ENCODE measurements at regions of chr5 and their contacts with region 1.

Region 1: DNA sequence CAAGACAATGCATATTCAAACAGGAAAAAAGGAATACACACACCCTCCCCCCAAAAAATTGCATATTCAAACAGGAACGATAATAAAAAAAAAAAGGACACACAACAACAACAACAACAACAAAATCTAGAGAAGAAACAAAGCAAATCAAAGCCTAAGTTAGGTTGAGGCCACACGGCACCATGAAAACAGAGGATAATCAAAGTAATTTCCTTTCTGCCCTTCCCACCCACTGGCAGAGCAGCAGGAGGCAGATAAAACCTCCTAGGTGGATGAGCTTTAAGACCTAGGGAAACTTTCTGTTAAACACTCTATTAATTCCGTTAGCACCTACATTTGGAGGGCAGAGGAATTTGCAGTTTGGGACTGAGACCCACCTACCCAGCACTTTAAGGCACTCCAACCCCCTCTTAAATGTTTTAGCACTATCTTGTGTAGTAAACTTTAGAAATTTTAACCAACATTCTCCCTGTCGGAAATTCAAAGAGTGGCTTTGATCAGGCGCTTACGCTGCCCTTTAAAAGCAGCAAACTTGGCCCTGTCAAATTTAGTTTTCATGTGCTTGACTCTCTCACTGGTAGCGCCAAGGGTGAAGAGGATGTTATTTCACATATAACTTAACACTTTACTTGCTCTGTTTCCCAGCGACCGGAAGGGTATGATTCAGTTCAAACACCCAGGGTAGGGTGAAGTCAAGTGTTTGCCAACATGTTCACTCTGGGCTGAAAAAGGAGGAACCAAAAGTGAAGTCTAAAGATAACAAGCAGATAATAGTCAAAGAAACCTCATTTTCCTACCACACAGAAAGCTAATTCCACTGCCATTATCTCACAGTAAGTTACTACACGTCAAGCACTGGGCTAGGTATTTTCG is 9.2 kb downstream of the ENC1 start:
- DNase-seq: no peak
- ATAC-seq: peak; percentile 10
- H3K4me3 ChIP-seq: 0 out of 4 replicates have a peak overlapping the region, but pooled peaks of 1 of the 2 experiments have one; percentile 2
- H3K27ac ChIP-seq: peak overlapping the region; percentile 86
- H3K4me1 ChIP-seq: peaks cover 60 to 71% of the 10 kb centered on the region in 2 experiments
- H3K27me3 ChIP-seq: no peaks in the 10 kb centered on the region
- CTCF ChIP-seq: no peak
- POLR2A ChIP-seq: no peak
- RAD21 ChIP-seq: no peak

Region 2: DNA sequence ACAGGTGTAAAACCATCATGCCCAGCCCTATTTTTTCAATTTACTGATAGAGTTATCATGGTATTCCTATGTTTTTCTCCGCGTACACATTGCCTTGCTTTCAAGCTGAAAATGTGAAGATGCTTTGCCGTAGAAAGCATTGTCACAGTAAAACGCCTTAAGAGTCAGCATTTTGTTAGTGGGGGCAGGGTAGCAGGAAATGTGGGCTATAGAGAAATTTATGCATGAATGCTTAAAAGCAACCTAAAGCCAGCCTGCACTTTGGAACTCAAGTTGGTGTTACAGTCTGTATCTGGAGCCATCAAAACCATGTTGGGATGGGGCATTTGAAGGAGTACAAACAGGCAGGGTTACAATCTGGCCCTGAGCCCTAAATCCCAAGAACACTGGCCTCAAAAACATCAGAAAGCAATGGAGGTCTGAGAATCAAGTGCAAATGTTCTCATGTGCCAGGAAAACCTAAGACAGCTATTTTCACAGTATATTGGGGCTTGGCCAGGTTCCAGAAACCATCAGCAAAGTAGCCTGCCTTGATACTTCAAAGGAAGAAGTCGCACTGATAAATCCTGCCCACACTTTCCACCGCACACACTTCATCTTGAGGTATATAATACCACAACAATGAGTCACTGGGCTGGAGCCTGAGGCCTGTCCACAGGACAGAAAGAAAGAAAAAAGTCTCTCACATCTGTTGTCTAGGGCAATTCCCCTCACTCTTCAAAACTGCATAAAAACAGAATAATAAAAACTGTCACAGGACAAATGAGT is 304.6 kb before region 1 on chr5:
- CTCF ChIA-PET with region 1: no interaction called
- POLR2A ChIA-PET with region 1: no interaction called
- RAD21 ChIA-PET with region 1: no interaction called
- intact Hi-C with region 1: loop called (anchors 5 kb)
- DNase-seq: peak; percentile 87
- ATAC-seq: peak; percentile 95
- H3K4me3 ChIP-seq: 0 out of 4 replicates have a peak overlapping the region, but pooled peaks of 1 of the 2 experiments have one; percentile 8
- H3K27ac ChIP-seq: no peak overlapping the region; the same call in 1 of the 2 replicates
- H3K4me1 ChIP-seq: peaks cover 27 to 31% of the 10 kb centered on the region in 2 experiments
- H3K27me3 ChIP-seq: peaks cover 48% of the 10 kb centered on the region
- CTCF ChIP-seq: no peak
- POLR2A ChIP-seq: no peak
- RAD21 ChIP-seq: peak; percentile 14; the same call in 1 of the 2 replicates

Region 3: GRCh38 chr5:74543156-74543995 is 87.9 kb before region 1 on chr5:
- CTCF ChIA-PET with region 1: no interaction called
- POLR2A ChIA-PET with region 1: no interaction called
- RAD21 ChIA-PET with region 1: no interaction called
- intact Hi-C with region 1: loop called (anchors 2 kb)
- DNase-seq: peak; percentile 82
- ATAC-seq: peak; percentile 90
- H3K4me3 ChIP-seq: peak overlapping the region; percentile 24 to 46
- H3K27ac ChIP-seq: peak overlapping the region; percentile 89
- H3K4me1 ChIP-seq: peaks cover 41 to 43% of the 10 kb centered on the region in 2 experiments
- H3K27me3 ChIP-seq: no peaks in the 10 kb centered on the region
- CTCF ChIP-seq: no peak
- POLR2A ChIP-seq: no peak
- RAD21 ChIP-seq: peak; percentile 32

Region 4: GRCh38 chr5:74766849-74767578 is 135.7 kb after region 1 on chr5 and contains the starts of genes GFM2 and NSA2:
- CTCF ChIA-PET with region 1: no interaction called
- POLR2A ChIA-PET with region 1: no interaction called
- RAD21 ChIA-PET with region 1: no interaction called
- intact Hi-C with region 1: no loop called
- DNase-seq: peak; percentile 91
- ATAC-seq: peak; percentile 86
- H3K4me3 ChIP-seq: peak within 1 kb of the TSS; percentile 86 to 99
- H3K27ac ChIP-seq: peak within 1 kb of the TSS; percentile 70
- H3K4me1 ChIP-seq: peaks cover 24 to 38% of the 10 kb centered on the region in 2 experiments; a peak in 3 of 4 replicates
- H3K27me3 ChIP-seq: no peaks in the 10 kb centered on the region
- CTCF ChIP-seq: no peak
- POLR2A ChIP-seq: peak; percentile 46
- RAD21 ChIP-seq: no peak
- total RNA-seq, gene GFM2: 25.0 TPM
- total RNA-seq, gene NSA2: 108 TPM